Heart left ventricle (tissue), 16 donors: ENCODE measurements at regions of chr11 and their contacts with region 1.

Region 1: DNA sequence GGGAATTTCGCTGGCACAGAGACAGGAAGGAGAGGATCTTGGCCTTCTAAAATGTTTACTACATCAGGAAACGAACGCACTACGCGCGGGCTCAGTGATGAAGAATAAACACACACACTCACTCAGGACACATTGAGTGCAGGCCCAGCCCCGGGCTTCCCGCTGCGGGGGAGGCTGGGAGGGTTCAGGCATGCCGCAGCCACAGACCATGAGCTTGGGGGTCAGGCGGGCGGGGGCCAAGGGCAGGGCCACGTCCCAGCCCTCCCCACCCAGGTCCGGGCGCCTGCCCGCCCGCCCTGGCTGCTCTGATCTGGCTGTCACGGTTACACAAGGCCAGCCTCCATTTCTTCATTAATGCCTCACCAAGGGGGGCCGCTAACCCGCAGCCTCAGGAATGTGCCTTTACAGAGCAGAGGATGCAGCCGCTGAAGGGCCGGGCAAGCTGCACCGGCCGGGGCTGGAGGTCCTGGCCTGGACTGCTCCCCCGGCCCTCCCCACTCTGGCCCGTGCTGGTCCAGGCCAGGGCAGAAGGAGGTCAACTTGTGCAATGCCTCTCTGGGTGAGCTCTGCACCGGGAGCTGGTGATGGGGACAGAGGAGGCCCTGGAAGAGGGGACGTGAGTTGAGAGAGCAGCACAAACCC is 41.7 kb downstream of the IGF2 start:
- DNase-seq: peak; percentile 76 to 83 (median 78)
- ATAC-seq: peak in 3 of 4 donors; percentile 38 to 80 (median 54)
- H3K4me3 ChIP-seq: peak overlapping the region in 4 of 12 donors; percentile 11 to 26 (median 21)
- H3K27ac ChIP-seq: peak overlapping the region; percentile 54 to 91 (median 84)
- H3K4me1 ChIP-seq: peaks cover 7 to 79% (median 52%) of the 10 kb centered on the region in 12 donors
- H3K27me3 ChIP-seq: no peaks in the 10 kb centered on the region
- CTCF ChIP-seq: no peak
- POLR2A ChIP-seq: no peak

Region 2: DNA sequence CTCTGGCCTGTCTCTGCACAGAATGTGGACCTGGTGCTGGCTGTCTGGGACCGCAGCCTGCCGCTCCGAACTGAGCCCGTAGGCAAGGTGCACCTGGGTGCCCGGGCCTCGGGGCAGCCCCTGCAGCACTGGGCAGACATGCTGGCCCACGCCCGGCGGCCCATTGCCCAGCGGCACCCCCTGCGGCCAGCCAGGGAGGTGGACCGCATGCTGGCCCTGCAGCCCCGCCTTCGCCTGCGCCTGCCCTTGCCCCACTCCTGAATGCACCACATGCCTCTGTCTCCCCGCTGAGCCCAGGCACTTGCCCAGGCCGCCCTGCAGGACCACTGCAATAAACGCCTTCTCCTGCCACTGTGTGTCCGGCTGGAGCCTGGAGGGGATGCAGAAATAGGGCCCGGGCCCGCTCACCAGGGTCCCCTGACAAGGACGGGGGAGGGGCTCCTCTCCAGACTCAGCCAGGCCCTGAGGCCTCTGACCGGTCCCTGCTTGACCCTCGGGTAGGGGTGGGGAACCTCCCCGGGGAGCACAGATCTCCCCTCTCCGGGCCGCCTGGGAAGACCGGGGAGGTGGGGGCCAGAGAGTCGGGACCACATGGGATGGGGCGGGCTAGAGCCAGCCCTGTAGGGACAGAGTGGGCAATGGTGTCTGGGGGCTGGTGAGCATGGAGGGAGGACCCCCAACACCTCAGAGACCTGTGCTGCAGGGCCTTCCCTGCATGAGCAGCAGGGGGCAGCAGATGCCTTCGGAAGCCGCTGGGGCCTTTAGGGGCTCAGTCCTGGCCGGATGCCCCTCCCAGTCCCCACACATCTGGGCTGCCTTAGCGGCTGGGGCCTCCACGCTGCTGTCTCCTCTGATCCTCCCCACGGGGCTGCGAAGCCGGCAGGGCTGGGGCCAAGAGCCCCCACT is 260.1 kb before region 1 on chr11:
- intact Hi-C with region 1: no loop called
- DNase-seq: peak; percentile 64 to 88 (median 70)
- ATAC-seq: peak; percentile 18 to 53 (median 42)
- H3K4me3 ChIP-seq: no peak overlapping the region
- H3K27ac ChIP-seq: peak overlapping the region in 1 of 12 donors; percentile 31
- H3K4me1 ChIP-seq: peaks cover 0 to 37% (median 12%) of the 10 kb centered on the region in 12 donors
- H3K27me3 ChIP-seq: no peaks in the 10 kb centered on the region
- CTCF ChIP-seq: peak; percentile 88 to 96 (median 92)
- POLR2A ChIP-seq: no peak

Region 3: GRCh38 chr11:2108675-2109491 is 11.4 kb after region 1 on chr11:
- intact Hi-C with region 1: loop called in 1 of 10 experiments (anchors 1 kb)
- DNase-seq: peak in 3 of 5 donors; percentile 13 to 59 (median 17)
- ATAC-seq: peak in 1 of 4 donors; percentile 27
- H3K4me3 ChIP-seq: no peak overlapping the region
- H3K27ac ChIP-seq: peak overlapping the region in 8 of 12 donors; percentile 23 to 67 (median 56)
- H3K4me1 ChIP-seq: peaks cover 0 to 14% (median 9%) of the 10 kb centered on the region in 12 donors
- H3K27me3 ChIP-seq: no peaks in the 10 kb centered on the region
- CTCF ChIP-seq: no peak
- POLR2A ChIP-seq: no peak

Region 4: GRCh38 chr11:2137202-2138071 is 40.0 kb after region 1 on chr11:
- intact Hi-C with region 1: loop called in 8 of 10 experiments (anchors 1 to 5 kb)
- DNase-seq: peak; percentile 70 to 84 (median 81)
- ATAC-seq: peak; percentile 70 to 89 (median 76)
- H3K4me3 ChIP-seq: peak overlapping the region; percentile 35 to 68 (median 54)
- H3K27ac ChIP-seq: peak overlapping the region in 11 of 12 donors; percentile 32 to 80 (median 72)
- H3K4me1 ChIP-seq: peaks cover 0 to 43% (median 5%) of the 10 kb centered on the region in 12 donors
- H3K27me3 ChIP-seq: peaks cover 23 to 74% (median 58%) of the 10 kb centered on the region in 9 donors
- CTCF ChIP-seq: no peak
- POLR2A ChIP-seq: peak in 1 of 2 donors; percentile 65